Caco-2 (cell line): ENCODE measurements at regions of chr4 and their contacts with region 1.

Region 1: GRCh38 chr4:85318415-85318814 is 156.5 kb upstream of the ARHGAP24 start:
- DNase-seq: no peak
- H3K4me3 ChIP-seq: no peak overlapping the region
- H3K4me3 Mint-ChIP-seq: no peak overlapping the region
- H3K27ac Mint-ChIP-seq: no peak overlapping the region
- H3K4me1 ChIP-seq: no peaks in the 10 kb centered on the region
- H3K4me1 Mint-ChIP-seq: no peaks in the 10 kb centered on the region
- H3K27me3 ChIP-seq: no peaks in the 10 kb centered on the region
- H3K27me3 Mint-ChIP-seq: no peaks in the 10 kb centered on the region
- CTCF ChIP-seq: no peak

Region 2: GRCh38 chr4:85681221-85681657 is 362.8 kb after region 1 on chr4:
- CTCF ChIA-PET with region 1: no interaction called
- POLR2A ChIA-PET with region 1: no interaction called
- intact Hi-C with region 1: loop called (anchors 10 kb)
- DNase-seq: no peak
- H3K4me3 ChIP-seq: no peak overlapping the region
- H3K4me3 Mint-ChIP-seq: no peak overlapping the region
- H3K27ac Mint-ChIP-seq: no peak overlapping the region
- H3K4me1 ChIP-seq: no peaks in the 10 kb centered on the region
- H3K4me1 Mint-ChIP-seq: no peaks in the 10 kb centered on the region
- H3K27me3 ChIP-seq: no peaks in the 10 kb centered on the region
- H3K27me3 Mint-ChIP-seq: peaks cover 3% of the 10 kb centered on the region
- CTCF ChIP-seq: no peak